Astrocyte of the cerebellum (primary cell): ENCODE measurements at regions of chr5 and their contacts with region 1.

Region 1: DNA sequence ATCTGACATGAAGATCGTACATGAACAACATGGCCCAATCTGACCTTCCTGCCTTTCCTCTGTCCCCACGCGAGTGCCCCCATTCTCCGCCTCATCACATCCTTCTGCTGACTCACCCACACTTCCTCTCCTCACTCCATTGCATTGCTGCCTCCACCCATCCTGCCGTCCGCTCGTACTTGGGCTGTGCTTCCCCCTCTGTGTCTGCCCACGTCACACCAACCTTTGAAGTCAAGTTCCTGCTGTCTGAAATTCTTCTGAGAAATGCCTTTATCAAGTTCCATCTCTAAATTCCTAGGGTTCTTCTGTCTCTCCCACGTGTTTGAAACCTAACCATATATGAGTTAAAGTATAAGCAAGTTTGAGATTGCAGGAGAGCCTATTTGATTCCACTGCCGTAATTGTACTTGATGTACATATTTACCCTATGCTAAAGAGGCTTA is 18.0 kb upstream of the STARD4 start:
- DNase-seq: no peak
- H3K4me3 ChIP-seq: no peak overlapping the region
- CTCF ChIP-seq: no peak

Region 2: DNA sequence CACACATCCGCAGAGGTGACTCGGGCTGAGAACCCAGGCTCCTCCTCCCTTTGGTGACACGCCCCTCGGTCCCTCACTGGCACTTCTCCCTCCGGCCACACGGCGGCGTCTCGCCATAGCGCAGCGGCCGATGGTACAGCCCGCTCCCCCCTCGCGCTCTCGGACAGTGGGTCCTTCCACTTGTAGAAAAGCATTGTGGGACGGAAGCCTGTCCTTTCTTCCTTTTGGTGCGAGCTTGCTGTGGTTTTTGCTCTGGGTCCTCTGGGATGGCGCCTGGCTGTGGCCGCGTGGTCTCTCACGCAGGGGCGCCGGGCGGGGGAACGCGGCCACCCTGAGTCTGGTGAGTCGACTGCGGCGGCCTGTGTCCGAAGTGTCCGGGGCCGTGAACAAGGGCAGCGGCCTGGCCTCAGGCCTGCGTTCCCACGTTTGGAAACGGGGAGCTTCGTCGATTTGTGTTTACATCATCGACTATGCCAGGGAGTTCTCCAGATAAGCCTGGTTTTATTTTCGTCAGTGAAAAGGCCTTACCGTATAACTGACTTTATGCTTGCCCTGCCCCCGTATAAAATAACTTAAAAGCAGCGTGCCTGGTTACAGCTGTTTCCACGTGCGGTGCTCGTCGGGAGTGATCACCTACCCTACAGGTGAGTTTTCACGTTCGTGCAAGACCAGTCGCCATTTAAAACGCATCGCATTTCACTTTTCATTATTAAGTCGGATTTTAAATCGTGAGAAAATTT is 630.5 kb after region 1 on chr5:
- in situ Hi-C with region 1: loop called (anchors 25 kb)
- DNase-seq: peak; percentile 82
- H3K4me3 ChIP-seq: peak overlapping the region; percentile 96
- CTCF ChIP-seq: peak; percentile 99